WTC11 (cell line): ENCODE measurements at regions of chr1 and their contacts with region 1.

Region 1: DNA sequence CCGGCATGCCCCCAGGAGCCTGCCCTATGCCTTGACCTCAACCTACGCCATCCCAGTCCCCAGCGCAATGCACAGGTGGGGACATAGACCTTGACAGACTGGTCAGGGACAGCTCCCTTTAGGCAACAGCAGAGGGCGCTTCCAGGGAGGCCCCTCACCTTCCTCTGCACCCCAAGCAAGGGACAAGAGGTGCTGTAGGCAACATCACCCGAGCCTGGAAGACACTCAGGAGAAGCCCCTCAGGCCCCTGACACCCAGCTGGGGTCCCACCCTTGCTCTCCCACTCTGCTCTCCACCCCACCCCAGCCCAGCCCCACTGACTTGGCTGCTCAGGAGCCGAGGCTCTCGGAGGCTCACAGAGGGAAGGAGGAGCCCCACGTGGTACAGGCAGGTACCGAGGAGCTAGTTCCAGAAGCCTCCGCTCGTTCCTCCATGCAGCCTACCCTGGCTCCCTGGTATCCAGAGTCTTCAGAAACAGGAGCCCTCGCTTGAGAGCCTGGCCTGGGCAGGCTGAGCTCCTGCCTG is 2.4 kb upstream of the WNT3A start:
- DNase-seq: peak; percentile 50
- ATAC-seq: peak; percentile 66
- H3K4me3 Mint-ChIP-seq: 0 out of 2 replicates have a peak overlapping the region, but pooled peaks have one; percentile 33
- H3K27ac Mint-ChIP-seq: no peak overlapping the region
- H3K4me1 Mint-ChIP-seq: peaks cover 35% of the 10 kb centered on the region
- H3K27me3 Mint-ChIP-seq: peaks cover 95% of the 10 kb centered on the region
- CTCF ChIP-seq: peak; percentile 45

Region 2: GRCh38 chr1:228031276-228031995 is 27.0 kb after region 1 on chr1:
- CTCF ChIA-PET with region 1: interaction called, 12 read pairs
- POLR2A ChIA-PET with region 1: interaction called, 3 read pairs
- DNase-seq: no peak
- ATAC-seq: no peak
- H3K4me3 Mint-ChIP-seq: no peak overlapping the region
- H3K27ac Mint-ChIP-seq: no peak overlapping the region
- H3K4me1 Mint-ChIP-seq: no peaks in the 10 kb centered on the region
- H3K27me3 Mint-ChIP-seq: peaks cover 48% of the 10 kb centered on the region
- CTCF ChIP-seq: no peak

Region 3: DNA sequence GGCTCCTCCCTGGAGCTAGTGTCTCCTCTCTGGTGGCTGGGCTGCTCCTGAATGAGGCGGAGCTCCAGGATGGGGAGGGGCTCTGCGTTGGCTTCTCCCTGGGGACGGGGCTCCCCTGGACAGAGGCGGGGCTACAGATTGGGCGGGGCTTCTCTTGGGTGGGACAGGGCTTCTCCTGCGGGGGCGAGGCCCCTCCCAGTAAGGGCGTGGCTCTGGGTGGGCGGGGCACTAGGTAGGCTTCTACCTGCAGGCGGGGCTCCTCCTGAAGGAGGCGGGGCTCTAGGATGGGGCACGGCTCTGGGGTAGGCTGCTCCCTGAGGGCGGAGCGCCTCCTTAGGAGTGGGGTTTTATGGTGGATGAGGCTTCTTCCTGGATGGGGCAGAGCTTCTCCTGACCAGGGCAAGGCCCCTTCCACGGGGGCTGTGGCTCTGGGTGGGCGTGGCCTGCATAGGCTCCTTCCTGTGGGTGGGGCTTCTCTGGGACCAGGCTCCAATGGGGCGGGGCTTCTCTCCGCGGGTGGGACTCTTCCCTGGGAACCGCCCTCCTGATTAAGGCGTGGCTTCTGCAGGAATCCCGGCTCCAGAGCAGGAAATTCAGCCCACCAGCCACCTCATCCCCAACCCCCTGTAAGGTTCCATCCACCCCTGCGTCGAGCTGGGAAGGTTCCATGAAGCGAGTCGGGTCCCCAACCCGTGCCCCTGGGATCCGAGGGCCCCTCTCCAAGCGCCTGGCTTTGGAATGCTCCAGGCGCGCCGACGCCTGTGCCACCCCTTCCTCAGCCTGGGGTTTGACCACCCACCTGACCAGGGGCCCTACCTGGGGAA is 55.5 kb after region 1 on chr1:
- CTCF ChIA-PET with region 1: interaction called, 71 read pairs
- POLR2A ChIA-PET with region 1: no interaction called
- DNase-seq: peak; percentile 100
- ATAC-seq: peak; percentile 84
- H3K4me3 Mint-ChIP-seq: peak overlapping the region; percentile 74
- H3K27ac Mint-ChIP-seq: no peak overlapping the region
- H3K4me1 Mint-ChIP-seq: peaks cover 5% of the 10 kb centered on the region
- H3K27me3 Mint-ChIP-seq: peaks cover 87% of the 10 kb centered on the region
- CTCF ChIP-seq: no peak

Region 4: DNA sequence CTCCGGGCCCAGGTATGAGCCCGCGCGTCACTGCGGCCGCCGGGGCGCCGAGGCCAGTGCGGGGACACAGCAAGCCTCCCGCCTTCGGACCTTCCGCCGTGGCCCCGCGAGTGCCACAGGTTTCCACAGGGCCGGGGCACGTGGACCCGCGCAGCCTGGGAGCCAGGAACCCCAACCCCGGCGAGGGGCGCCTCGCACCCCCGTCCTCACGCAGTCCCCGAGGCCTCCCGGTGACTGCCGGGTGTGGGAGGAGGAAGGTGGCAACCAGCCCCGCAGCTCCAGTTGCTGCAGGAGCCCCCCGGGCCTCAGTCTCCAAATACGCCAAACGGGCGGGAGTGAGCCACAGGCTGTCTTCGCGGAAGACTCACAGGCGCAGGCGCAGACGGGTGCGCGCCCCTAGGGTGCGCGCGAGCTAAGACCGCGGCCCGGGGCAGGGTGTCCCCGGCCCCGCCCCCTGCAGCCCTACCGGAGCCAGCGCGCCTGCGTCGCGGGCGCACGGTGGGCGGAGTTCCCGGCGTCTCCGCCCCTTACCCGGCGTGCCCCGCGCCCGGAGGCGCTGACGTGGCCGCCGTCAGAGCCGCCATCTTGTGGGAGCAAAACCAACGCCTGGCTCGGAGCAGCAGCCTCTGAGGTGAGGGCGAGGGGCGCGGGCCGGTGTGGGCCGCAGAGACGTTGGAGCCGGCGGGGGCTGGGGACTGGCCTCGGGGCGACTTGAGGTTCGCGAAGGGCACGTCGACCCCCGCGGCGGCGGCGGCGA is 77.9 kb after region 1 on chr1 and contains the start of gene ARF1:
- CTCF ChIA-PET with region 1: interaction called, 38 read pairs
- POLR2A ChIA-PET with region 1: no interaction called
- DNase-seq: peak; percentile 88
- ATAC-seq: peak; percentile 85
- H3K4me3 Mint-ChIP-seq: peak within 1 kb of the TSS; percentile 95
- H3K27ac Mint-ChIP-seq: peak within 1 kb of the TSS; percentile 94
- H3K4me1 Mint-ChIP-seq: peaks cover 33% of the 10 kb centered on the region
- H3K27me3 Mint-ChIP-seq: peaks cover 36% of the 10 kb centered on the region
- CTCF ChIP-seq: no peak
- total RNA-seq, gene ARF1: 295 to 330 TPM (median 300 TPM) in 3 replicates

Region 5: GRCh38 chr1:228165372-228166169 is 161.2 kb after region 1 on chr1 and contains the start of gene IBA57:
- CTCF ChIA-PET with region 1: interaction called, 19 read pairs
- POLR2A ChIA-PET with region 1: no interaction called
- DNase-seq: peak; percentile 99
- ATAC-seq: peak; percentile 94
- H3K4me3 Mint-ChIP-seq: peak within 1 kb of the TSS; percentile 85
- H3K27ac Mint-ChIP-seq: peak within 1 kb of the TSS; percentile 98
- H3K4me1 Mint-ChIP-seq: peaks cover 13% of the 10 kb centered on the region; the same call in 1 of the 2 replicates
- H3K27me3 Mint-ChIP-seq: peaks cover 6% of the 10 kb centered on the region; the same call in 1 of the 2 replicates
- CTCF ChIP-seq: peak; percentile 71
- total RNA-seq, gene IBA57: 11.4 to 12.5 TPM (median 12.1 TPM) in 3 replicates

Region 6: GRCh38 chr1:228236744-228237143 is 232.4 kb after region 1 on chr1:
- CTCF ChIA-PET with region 1: no interaction called
- POLR2A ChIA-PET with region 1: no interaction called
- DNase-seq: peak; percentile 81
- ATAC-seq: peak; percentile 98
- H3K4me3 Mint-ChIP-seq: no peak overlapping the region
- H3K27ac Mint-ChIP-seq: no peak overlapping the region
- H3K4me1 Mint-ChIP-seq: no peaks in the 10 kb centered on the region
- H3K27me3 Mint-ChIP-seq: no peaks in the 10 kb centered on the region
- CTCF ChIP-seq: peak; percentile 51

Region 7: GRCh38 chr1:228315945-228316588 is 311.7 kb after region 1 on chr1:
- CTCF ChIA-PET with region 1: no interaction called
- POLR2A ChIA-PET with region 1: no interaction called
- DNase-seq: no peak
- ATAC-seq: peak; percentile 38
- H3K4me3 Mint-ChIP-seq: no peak overlapping the region
- H3K27ac Mint-ChIP-seq: no peak overlapping the region
- H3K4me1 Mint-ChIP-seq: no peaks in the 10 kb centered on the region
- H3K27me3 Mint-ChIP-seq: no peaks in the 10 kb centered on the region; the same call in 1 of the 2 replicates
- CTCF ChIP-seq: no peak